ENCODE measurements at regions of chr5 and their contacts with region 1.

Region 1: GRCh38 chr5:170267431-170268152 is 30.0 kb downstream of the LCP2 start:
- DNase-seq: peak; percentile 63 to 96 (median 82)

Region 2: GRCh38 chr5:170225326-170226128 is 42.1 kb before region 1 on chr5:
- intact Hi-C with region 1: loop called (anchors 1 kb)
- DNase-seq: peak; percentile 55 to 95 (median 84)

Region 3: DNA sequence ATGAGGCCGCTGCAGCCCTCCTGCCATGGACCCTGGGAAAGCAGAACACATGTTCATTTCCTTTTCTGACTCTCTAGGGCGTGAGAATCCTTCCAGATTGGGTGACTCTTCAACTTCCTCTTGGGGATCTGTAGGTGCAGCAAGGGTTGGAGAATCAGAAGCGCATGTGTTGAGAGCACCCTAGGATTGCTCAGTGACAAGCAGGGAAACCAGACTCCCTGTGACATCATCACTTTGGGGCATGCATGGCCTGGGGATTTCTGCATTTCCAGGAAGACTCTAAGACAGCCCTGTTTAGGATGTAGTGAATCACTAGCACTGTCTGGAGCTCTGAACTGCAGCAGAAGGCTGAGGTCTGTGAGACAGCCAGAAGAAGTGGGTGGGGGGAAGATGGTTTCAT is 45.1 kb after region 1 on chr5:
- intact Hi-C with region 1: loop called (anchors 10 kb)
- DNase-seq: no peak

Region 4: GRCh38 chr5:170348137-170348633 is 80.6 kb after region 1 on chr5:
- intact Hi-C with region 1: loop called (anchors 5 kb)
- DNase-seq: no peak

Region 5: GRCh38 chr5:170420780-170421412 is 153.3 kb after region 1 on chr5:
- intact Hi-C with region 1: loop called (anchors 2 kb)
- DNase-seq: peak in 4 of 10 donors; percentile 47 to 64 (median 52)

Measured in posterior cingulate gyrus (tissue), 11 donors.